T-cell (primary cell): ENCODE measurements at regions of chr2 and their contacts with region 1.

Region 1: GRCh38 chr2:217095511-217096205 is 235.8 kb upstream of the TNP1 start:
- DNase-seq: no peak
- ATAC-seq: no peak
- H3K4me3 ChIP-seq: no peak overlapping the region
- H3K4me3 Mint-ChIP-seq: no peak overlapping the region
- H3K27ac ChIP-seq: no peak overlapping the region
- H3K27ac Mint-ChIP-seq: no peak overlapping the region
- H3K4me1 ChIP-seq: no peaks in the 10 kb centered on the region
- H3K4me1 Mint-ChIP-seq: peaks cover 0 to 1% (median 0%) of the 10 kb centered on the region in 3 donors
- H3K27me3 ChIP-seq: peaks cover 0 to 2% of the 10 kb centered on the region in 2 experiments
- H3K27me3 Mint-ChIP-seq: no peaks in the 10 kb centered on the region

Region 2: DNA sequence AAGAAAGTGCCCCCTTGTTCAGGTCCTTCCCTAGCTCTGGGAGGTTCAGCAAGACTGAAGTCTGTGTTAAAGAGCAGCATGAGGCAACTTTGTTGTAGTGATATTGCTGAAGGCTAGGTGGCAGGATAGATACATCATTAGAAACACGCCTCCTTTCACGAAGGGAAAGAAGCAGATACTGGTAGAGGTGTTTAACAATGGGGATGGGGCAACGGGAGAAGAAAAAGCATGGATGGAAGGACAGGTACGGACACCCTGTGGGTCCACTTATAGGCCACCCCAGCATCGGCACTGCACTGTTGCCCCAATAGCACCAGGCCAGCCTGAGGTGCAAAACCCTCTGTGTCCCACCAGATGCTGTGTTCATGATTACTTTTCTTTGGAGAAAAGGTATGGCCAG is 396.8 kb before region 1 on chr2:
- CTCF ChIA-PET with region 1: no interaction called
- POLR2A ChIA-PET with region 1: no interaction called
- DNase-seq: peak in 1 of 35 experiments; percentile 49
- ATAC-seq: peak in 3 of 4 experiments; percentile 48 to 64 (median 54)
- H3K4me3 ChIP-seq: no peak overlapping the region
- H3K4me3 Mint-ChIP-seq: no peak overlapping the region
- H3K27ac ChIP-seq: no peak overlapping the region
- H3K27ac Mint-ChIP-seq: no peak overlapping the region
- H3K4me1 ChIP-seq: peaks cover 4 to 16% of the 10 kb centered on the region in 2 experiments
- H3K4me1 Mint-ChIP-seq: peaks cover 8 to 20% (median 8%) of the 10 kb centered on the region in 3 donors
- H3K27me3 ChIP-seq: peaks cover 0 to 34% of the 10 kb centered on the region in 2 experiments
- H3K27me3 Mint-ChIP-seq: peaks cover 36 to 50% of the 10 kb centered on the region in 2 donors

Region 3: DNA sequence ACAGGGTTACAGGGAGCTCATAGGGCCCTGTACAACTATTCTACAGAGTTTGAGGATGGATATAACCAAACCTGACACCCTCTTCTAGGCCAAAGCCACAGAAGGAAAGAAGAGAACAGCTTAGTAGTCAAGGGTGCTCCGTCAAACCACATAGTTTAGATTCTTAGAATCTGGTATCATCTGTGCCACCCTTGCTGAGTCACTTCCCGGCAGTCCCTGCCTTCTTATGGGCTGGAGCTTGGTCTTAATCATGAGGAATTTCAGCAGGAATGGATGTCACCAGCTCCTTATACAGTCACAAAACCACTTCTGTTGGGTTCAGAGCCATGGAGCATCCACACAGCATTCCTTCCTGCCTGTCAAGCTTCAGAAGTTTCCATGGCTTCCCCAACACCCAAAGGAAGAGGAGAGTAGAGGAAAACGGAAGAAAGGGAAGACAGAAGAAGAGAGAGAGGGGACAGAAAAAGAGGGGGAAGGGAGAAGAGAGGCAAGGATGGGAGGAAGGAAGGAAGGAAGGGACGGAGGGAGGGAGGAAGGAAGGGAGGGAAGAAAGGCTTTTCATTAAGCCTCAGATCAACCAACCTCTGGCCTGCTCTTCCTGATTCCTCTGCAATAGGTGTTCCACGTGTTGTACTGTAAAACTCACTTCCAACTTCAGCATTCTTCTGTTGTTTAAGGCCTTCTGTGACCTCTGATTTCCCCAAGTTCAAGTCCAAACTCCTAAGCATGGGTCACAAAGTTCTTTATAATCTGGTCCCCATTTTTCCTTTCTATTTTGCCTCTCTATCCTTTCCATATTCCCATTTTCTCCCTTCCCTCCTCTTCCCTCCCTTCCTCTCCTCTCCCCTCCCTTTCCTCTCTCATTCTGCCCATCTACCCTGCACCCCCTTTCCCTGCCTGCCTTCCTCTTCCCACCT is 10.3 kb after region 1 on chr2:
- CTCF ChIA-PET with region 1: interaction called in 1 of 2 experiments, 13 read pairs
- POLR2A ChIA-PET with region 1: no interaction called
- DNase-seq: no peak
- ATAC-seq: no peak
- H3K4me3 ChIP-seq: no peak overlapping the region
- H3K4me3 Mint-ChIP-seq: no peak overlapping the region
- H3K27ac ChIP-seq: no peak overlapping the region
- H3K27ac Mint-ChIP-seq: no peak overlapping the region
- H3K4me1 ChIP-seq: no peaks in the 10 kb centered on the region
- H3K4me1 Mint-ChIP-seq: no peaks in the 10 kb centered on the region
- H3K27me3 ChIP-seq: no peaks in the 10 kb centered on the region
- H3K27me3 Mint-ChIP-seq: peaks cover 0 to 5% of the 10 kb centered on the region in 2 donors

Region 4: DNA sequence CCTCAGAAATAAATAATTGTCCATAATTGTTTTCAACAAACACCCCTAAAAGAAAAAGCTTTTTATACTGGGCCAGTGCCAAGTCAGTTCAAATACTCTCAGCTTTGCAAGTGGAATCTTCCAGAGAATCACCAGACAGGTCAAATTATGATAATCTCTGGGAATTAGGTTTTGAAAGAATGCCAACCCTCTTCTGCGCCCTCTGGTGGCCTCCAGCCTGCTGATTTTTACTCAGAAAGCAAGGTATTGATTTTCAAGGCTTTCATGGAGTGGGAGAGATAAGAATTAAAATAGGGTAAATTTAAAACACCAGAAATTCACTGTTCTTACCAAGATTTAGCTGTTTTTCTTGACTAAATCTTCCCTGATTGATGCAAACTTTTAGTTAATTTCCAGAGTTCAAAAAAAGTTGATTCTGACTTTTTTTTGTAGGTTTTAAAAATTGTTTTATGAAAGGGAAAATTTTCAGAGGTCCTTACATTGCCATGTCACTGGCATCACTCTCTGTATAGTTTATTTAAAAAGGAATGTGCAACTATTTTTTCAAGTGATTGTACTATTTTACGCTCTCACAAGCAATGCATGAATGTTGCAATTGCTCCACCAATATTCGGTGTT is 47.1 kb after region 1 on chr2:
- CTCF ChIA-PET with region 1: no interaction called
- POLR2A ChIA-PET with region 1: no interaction called
- DNase-seq: no peak
- ATAC-seq: no peak
- H3K4me3 ChIP-seq: no peak overlapping the region
- H3K4me3 Mint-ChIP-seq: no peak overlapping the region
- H3K27ac ChIP-seq: no peak overlapping the region
- H3K27ac Mint-ChIP-seq: no peak overlapping the region
- H3K4me1 ChIP-seq: no peaks in the 10 kb centered on the region
- H3K4me1 Mint-ChIP-seq: no peaks in the 10 kb centered on the region
- H3K27me3 ChIP-seq: no peaks in the 10 kb centered on the region
- H3K27me3 Mint-ChIP-seq: peaks cover 7% of the 10 kb centered on the region in 2 donors